Right ventricle myocardium inferior (tissue), 1 donor: ENCODE measurements at regions of chr16 and their contacts with region 1.

Region 1: GRCh38 chr16:84138824-84139627 is 6.0 kb downstream of the HSDL1 start:
- DNase-seq: no peak
- ATAC-seq: peak; percentile 82

Region 2: GRCh38 chr16:84022644-84023043 is 116.4 kb before region 1 on chr16:
- intact Hi-C with region 1: no loop called
- DNase-seq: no peak
- ATAC-seq: no peak

Region 3: GRCh38 chr16:84084570-84085270 is 54.3 kb before region 1 on chr16:
- intact Hi-C with region 1: loop called (anchors 5 kb)
- DNase-seq: peak; percentile 70
- ATAC-seq: peak; percentile 38

Region 4: GRCh38 chr16:84116720-84117493 is 22.1 kb before region 1 on chr16 and contains the start of gene MBTPS1:
- intact Hi-C with region 1: loop called (anchors 2 kb)
- DNase-seq: peak; percentile 99
- ATAC-seq: peak; percentile 99
- total RNA-seq, gene MBTPS1: 70.2 TPM